ENCODE measurements at regions of chr2 and their contacts with region 1.

Region 1: DNA sequence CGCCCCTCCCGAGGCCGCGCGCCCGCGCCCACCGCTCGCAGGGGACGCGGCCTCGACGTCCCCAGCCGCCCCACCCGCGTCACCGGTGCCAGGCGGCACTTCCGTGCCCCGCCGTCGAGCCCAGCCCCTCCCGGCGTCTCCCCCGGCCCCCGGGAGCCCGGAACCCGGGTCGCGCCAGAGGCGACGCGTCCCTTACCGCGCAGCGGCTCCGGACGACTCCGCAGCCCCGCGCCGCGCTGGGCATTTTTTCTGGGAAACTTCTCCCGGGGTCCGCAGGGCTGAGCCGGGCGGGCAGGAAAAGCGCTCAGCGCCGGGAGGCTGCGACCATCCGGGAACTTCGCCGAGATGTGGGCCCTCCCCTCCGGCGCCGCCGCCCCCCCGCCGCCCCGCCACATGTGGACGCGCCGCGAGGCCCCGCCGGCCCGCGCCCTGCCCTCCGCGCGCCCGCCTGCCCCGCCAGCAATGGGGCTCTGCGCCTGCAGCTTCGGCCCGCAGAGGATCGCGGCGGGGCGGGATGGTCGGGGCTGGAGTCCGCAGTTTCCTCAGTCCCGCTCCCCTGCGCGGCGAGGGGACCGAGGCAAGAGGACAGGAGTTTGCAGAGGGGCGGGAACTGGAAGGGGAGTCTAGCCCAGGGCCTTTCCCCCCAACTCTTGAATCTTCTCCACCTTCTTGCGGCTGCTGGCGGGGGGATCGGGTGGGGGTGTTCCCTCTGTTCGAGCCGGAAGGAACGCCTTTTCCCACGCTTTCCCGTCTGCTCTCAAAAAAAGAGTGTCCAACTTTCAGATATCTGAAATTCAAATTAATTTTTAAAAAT is 81.5 kb downstream of the CHRNA1 start:
- DNase-seq: peak; percentile 75 to 80
- ATAC-seq: peak; percentile 53 to 83 (median 72)
- H3K4me3 ChIP-seq: peak overlapping the region; percentile 79
- H3K27ac ChIP-seq: peak overlapping the region; percentile 60
- H3K4me1 ChIP-seq: no peaks in the 10 kb centered on the region
- H3K27me3 ChIP-seq: peaks cover 0 to 30% (median 0%) of the 10 kb centered on the region in 3 donors
- CTCF ChIP-seq: no peak

Region 2: GRCh38 chr2:174536304-174536703 is 146.5 kb before region 1 on chr2:
- intact Hi-C with region 1: no loop called
- DNase-seq: no peak
- ATAC-seq: no peak
- H3K4me3 ChIP-seq: no peak overlapping the region
- H3K27ac ChIP-seq: no peak overlapping the region
- H3K4me1 ChIP-seq: no peaks in the 10 kb centered on the region
- H3K27me3 ChIP-seq: no peaks in the 10 kb centered on the region
- CTCF ChIP-seq: no peak

Region 3: GRCh38 chr2:174553811-174554493 is 128.8 kb before region 1 on chr2:
- intact Hi-C with region 1: no loop called
- DNase-seq: no peak
- ATAC-seq: no peak
- H3K4me3 ChIP-seq: no peak overlapping the region
- H3K27ac ChIP-seq: no peak overlapping the region
- H3K4me1 ChIP-seq: no peaks in the 10 kb centered on the region
- H3K27me3 ChIP-seq: no peaks in the 10 kb centered on the region
- CTCF ChIP-seq: no peak

Region 4: DNA sequence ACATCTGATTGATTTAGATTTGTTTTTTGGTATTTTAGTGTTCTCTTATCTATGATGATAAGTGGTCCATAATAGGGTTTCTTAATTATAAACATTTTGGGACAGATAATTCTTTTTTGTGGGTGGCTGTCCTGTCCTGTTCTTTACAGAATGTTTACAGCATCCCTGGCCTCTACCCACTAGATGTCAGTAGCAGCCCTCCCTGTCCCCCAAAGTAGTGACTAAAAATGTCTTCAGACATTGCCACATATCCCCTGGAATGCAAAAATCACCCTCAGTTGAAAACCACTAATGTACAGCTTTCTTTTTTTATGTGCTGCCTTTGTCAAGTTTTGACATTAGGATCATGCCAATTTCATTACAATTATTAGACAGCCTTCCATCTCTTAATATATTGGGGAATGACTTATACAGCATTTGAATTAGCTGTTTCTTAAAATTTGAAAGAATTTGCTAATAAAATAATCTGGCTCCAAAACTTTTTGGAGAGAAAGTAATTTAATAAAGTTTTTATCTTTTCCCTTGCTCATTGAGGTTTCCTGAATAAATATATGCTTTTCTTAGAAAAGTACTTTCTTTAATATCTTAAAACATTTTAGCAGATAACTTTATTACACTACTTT is 104.7 kb before region 1 on chr2:
- intact Hi-C with region 1: loop called in 1 of 2 experiments (anchors 10 kb)
- DNase-seq: no peak
- ATAC-seq: no peak
- H3K4me3 ChIP-seq: no peak overlapping the region
- H3K27ac ChIP-seq: no peak overlapping the region
- H3K4me1 ChIP-seq: no peaks in the 10 kb centered on the region
- H3K27me3 ChIP-seq: no peaks in the 10 kb centered on the region
- CTCF ChIP-seq: peak; percentile 25

Measured in psoas muscle (tissue), 8 donors.